ENCODE measurements at regions of chr11 and their contacts with region 1.

Region 1: GRCh38 chr11:447923-448731 is 2.0 kb upstream of the PTDSS2 start:
- DNase-seq: peak; percentile 99
- ATAC-seq: peak; percentile 88

Region 2: GRCh38 chr11:304915-305843 is 142.9 kb before region 1 on chr11:
- intact Hi-C with region 1: loop called (anchors 5 kb)
- DNase-seq: peak; percentile 79
- ATAC-seq: no peak

Region 3: GRCh38 chr11:406978-407739 is 41.0 kb before region 1 on chr11:
- intact Hi-C with region 1: loop called (anchors 2 kb)
- DNase-seq: peak; percentile 92
- ATAC-seq: peak; percentile 71

Region 4: DNA sequence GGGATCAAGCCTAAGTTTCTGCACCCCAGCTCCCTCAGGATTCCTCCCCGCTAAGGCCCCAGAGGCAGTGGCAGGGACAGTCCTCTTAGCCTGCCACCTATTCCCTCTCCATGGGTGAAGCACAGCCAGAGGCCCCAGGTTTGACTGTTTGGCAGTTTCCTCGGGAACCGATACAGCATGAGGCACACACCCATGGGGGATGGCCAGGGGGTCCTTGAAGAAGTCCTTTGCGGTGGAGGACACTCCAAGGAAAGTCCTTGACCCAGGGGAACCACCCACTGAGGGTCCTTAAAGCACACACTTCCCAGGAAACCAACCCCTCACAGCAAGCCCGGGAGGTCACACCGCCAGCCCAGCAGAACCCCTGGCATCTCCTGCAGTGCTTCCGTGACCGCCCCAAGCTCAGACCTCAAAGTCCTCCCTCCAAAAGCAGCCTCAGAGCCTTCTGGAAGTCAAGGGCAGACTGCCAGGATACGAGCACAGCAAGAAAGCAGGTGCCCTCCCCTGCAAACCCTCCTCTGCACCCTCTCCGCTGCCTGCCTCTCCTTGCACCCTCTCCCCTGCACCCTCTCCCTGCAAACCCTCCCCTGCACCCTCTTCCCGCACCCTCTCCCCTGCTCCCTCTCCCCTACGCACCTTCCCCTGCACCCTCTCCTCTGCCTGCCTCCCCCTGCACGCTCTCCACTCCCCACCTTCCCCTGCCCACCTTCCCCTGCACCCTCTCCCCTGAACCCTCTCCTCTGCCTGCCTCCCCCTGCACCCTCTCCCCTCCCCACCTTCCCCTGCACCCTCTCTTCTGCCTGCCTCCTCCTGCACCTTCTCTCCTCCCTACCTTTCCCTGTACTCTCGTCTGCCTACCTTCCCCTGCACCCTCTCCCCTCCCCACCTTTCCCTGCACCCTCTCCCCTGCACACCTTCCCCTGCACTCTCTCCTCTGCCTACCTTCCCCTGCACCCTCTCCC is 34.7 kb before region 1 on chr11:
- intact Hi-C with region 1: loop called (anchors 2 kb)
- DNase-seq: peak; percentile 39
- ATAC-seq: no peak

Region 5: DNA sequence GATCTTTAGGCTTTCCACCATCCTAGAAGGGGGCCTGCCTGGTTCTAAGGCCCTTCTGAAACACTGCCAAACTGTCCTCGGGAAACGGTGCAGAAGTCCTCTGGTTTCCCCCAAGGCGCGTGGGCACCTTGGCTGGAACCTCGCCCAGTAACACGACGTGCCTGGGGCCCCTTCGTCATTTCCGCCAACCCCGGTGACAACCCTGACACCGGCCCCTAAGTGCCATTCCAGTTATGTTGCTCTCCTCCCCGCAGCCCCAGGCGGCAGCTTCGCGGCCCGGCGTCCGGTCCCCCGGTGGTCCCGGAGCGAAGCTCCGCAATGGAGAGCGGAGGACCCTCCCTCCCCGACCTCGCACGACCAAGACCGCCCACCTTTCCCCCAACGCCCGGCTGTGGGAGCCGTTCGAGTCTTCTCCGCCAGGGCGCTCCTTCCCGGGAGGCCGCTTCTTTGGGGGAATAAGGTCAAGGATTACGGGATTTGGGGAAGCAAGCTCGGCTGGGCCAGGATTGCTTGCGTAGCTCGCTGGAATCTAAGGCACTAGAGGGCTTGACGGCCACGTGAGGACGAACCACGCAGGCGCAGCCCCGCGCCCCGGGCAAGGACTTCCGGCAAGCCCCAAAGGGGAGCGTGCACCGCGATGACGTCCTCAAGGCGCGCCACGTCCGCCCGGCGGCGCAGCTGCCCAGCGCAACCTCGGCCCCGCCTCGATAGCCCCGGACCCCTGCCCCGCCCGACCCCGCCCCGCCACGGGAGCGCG is 58.3 kb after region 1 on chr11:
- intact Hi-C with region 1: loop called (anchors 2 kb)
- DNase-seq: peak; percentile 97
- ATAC-seq: peak; percentile 89

Region 6: GRCh38 chr11:560305-561147 is 112.4 kb after region 1 on chr11 and contains the starts of genes LMNTD2 and RASSF7:
- intact Hi-C with region 1: no loop called
- DNase-seq: peak; percentile 95
- ATAC-seq: peak; percentile 95
- total RNA-seq, gene LMNTD2: 0.14 TPM
- total RNA-seq, gene RASSF7: 3.9 TPM

Measured in Right ventricle myocardium inferior (tissue), 1 donor.